Aorta (tissue), 5 donors: ENCODE measurements at regions of chr1 and their contacts with region 1.

Region 1: DNA sequence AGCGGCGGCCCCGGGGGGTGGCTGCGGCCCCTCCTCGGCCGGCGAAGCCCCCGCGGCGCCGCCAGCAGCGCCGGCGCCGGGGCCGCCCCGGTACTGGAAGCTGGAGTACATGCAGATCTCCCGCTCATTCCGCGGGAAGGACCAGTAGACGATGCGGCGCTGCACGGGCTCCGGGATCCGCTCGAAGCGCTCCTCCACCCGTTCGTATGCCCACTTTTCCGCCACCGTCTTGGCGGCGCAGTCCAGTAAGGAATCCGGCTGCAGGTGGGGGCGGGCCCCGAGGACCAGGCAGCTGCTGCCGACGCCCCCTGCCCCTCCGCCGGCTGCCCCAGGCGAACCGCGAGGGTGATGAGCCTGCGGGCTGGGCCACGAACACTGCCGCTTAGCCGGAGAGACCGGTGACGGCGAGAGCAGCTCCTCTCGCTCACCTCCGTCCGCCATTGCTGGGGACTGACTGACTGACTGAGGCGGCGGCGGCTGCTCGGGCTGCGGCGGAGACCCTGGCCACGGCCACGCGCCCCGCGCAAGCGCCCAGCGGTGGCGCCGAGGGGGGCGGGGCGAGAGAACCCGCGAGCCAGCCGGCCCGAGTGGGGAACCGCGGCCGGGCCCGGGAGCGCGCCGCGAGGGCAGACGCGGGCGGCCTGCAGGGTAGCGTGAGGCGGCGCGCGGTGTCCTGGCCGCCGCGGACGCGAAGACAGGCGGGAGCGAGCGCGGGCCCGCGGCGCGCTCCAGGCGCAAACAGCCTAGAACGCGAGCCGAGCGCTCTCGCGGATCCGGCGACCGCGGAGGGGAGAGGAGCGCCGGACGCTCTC is at the start of gene ZSWIM5:
- DNase-seq: peak; percentile 71 to 90
- ATAC-seq: peak; percentile 93
- H3K4me3 ChIP-seq: peak within 1 kb of the TSS; percentile 58 to 75
- H3K27ac ChIP-seq: peak within 1 kb of the TSS; percentile 51 to 70
- H3K4me1 ChIP-seq: no peaks in the 10 kb centered on the region
- H3K27me3 ChIP-seq: no peaks in the 10 kb centered on the region
- total RNA-seq, gene ZSWIM5: 2.1 to 2.8 TPM

Region 2: GRCh38 chr1:44327679-44328491 is 878.2 kb before region 1 on chr1:
- intact Hi-C with region 1: no loop called
- DNase-seq: peak; percentile 93 to 96
- ATAC-seq: peak; percentile 91
- H3K4me3 ChIP-seq: no peak overlapping the region
- H3K27ac ChIP-seq: peak overlapping the region in 1 of 2 donors; percentile 68
- H3K4me1 ChIP-seq: peaks cover 2 to 4% of the 10 kb centered on the region in 2 donors
- H3K27me3 ChIP-seq: no peaks in the 10 kb centered on the region

Region 3: DNA sequence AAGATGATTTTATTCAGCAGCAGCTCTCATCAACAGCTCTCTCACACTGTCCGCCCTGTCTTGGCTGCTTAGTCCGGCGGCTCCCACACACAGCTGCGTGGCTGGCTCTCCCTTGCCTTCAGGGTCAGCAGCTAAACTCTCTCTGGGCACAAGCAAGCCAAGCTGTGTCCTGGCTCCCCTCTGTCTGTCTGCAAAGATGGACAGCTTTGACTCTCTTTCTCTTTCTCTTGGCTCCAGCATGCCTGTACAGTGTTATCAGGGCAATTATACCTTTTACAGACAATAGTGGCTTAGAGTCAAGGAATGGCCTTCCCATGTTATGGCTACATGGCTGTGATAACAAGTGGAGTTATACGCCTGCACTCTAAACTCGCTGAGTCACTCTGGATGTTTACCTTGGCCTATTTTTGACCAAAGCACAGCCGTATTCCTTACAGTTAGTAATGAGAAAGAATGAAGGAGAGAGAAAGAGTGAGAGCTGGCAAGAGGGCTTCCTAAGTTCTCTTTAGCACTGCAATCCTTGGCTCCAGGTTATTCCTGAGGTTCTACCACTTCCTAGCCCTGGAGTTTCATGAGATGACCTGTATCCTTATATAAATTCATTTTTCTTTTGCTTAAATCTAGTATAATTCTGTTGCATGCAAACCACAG is 60.2 kb after region 1 on chr1:
- intact Hi-C with region 1: loop called in 1 of 2 experiments (anchors 10 kb)
- DNase-seq: peak; percentile 71 to 80
- ATAC-seq: peak; percentile 85
- H3K4me3 ChIP-seq: no peak overlapping the region
- H3K27ac ChIP-seq: peak overlapping the region in 1 of 2 donors; percentile 78
- H3K4me1 ChIP-seq: no peaks in the 10 kb centered on the region
- H3K27me3 ChIP-seq: no peaks in the 10 kb centered on the region